Common myeloid progenitor, CD34-positive (primary cell): ENCODE measurements at regions of chr3 and their contacts with region 1.

Region 1: DNA sequence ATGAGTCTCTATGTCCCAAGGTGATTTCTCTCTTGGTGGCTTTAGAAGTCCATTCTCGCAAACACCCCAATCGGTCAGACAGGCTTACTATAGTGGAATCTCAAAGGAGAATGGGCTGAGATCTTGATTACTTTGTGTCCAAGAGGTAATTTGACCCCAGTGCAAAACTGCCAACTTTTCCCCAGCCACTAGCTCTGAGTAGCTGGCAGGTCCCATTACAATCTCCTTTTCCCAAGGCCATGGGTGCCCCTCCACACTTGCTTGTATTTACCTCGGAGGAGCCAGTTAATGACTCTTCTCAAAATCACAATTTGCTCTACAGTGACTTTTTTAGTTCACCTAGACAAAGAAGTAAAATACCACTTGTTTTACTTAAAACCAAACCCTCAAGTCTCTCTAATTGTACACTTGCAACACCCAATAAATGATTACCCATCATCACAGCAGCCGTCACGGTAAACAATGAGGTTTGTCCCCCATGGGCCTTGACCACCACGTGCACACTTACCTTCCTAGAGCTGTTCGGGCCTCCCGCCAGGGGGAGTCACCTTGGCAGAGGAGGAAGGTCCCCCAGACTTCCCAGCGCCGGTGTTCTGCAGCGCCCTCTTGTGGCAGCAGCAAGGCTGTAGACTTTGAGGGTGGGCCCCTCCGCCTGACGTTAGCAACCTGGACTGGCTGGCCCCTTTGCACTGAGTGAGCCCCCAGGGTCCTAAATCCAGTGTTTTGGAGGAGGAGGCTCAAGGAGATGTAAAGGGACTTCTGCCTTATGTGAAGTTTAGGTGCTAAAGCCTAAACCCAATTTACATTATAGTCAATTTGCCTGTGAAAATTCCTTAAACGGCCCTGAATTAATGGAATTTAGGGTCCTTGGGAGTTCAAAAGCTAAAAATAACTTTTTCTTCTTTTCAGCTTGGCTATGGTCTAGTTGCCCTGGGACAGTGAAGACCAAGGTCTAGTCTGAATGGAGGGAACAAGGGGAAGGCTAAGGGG is 18.6 kb upstream of the HDAC11 start:
- DNase-seq: peak; percentile 69 to 86 (median 82)
- H3K4me3 ChIP-seq: no peak overlapping the region
- H3K27ac ChIP-seq: no peak overlapping the region
- H3K4me1 ChIP-seq: no peaks in the 10 kb centered on the region
- H3K27me3 ChIP-seq: peaks cover 0 to 4% (median 0%) of the 10 kb centered on the region in 5 experiments

Region 2: GRCh38 chr3:13198264-13198879 is 263.1 kb before region 1 on chr3:
- CTCF ChIA-PET with region 1: interaction called, 10 read pairs
- POLR2A ChIA-PET with region 1: interaction called, 3 read pairs
- DNase-seq: no peak
- H3K4me3 ChIP-seq: no peak overlapping the region
- H3K27ac ChIP-seq: no peak overlapping the region
- H3K4me1 ChIP-seq: peaks cover 8 to 36% (median 15%) of the 10 kb centered on the region in 4 experiments
- H3K27me3 ChIP-seq: peaks cover 0 to 23% (median 5%) of the 10 kb centered on the region in 5 experiments

Region 3: DNA sequence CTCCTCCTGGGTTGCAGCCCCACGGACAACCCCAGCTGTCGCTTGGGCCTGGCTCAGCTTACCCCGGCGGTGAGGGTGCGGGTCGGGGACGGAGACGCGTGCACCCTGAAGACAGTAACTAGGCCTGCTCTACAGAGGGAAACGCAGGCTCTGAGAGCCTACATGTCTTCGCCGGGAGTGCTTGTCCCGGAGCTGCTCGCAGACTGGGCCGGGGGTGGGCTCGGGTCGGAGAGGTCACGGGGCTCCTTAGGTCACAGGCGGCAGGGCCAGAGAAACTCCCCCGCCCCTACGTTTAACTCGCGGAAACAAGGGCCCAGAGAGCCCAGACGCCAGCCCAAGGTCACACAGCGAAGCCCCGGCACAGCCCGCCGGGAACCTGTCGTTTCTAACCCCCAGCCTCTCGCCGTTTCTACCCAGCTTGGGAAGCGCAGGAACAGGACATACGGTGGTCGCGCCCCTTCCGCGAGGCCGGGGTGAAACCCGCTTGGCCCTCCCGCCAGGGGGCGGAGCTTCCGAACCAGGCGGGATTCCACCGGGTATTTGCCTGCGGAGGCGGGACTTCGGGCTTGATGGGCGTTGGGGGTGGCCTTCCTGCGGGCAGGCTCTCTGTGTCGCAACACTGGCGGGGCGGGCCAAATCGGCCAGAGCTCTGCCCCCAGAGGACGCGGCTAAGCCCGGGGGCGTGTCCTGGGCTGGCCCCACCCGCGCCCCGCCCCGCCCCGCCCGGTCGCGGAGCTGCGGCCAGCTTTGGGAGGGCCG is 18.3 kb after region 1 on chr3 and contains the start of gene HDAC11:
- CTCF ChIA-PET with region 1: interaction called, 38 read pairs
- POLR2A ChIA-PET with region 1: no interaction called
- DNase-seq: peak; percentile 96 to 97 (median 97)
- H3K4me3 ChIP-seq: peak within 1 kb of the TSS; percentile 43 to 94 (median 80)
- H3K27ac ChIP-seq: peak within 1 kb of the TSS; percentile 61 to 80
- H3K4me1 ChIP-seq: peaks cover 0 to 32% (median 20%) of the 10 kb centered on the region in 4 experiments
- H3K27me3 ChIP-seq: peaks cover 0 to 3% (median 0%) of the 10 kb centered on the region in 5 experiments

Region 4: DNA sequence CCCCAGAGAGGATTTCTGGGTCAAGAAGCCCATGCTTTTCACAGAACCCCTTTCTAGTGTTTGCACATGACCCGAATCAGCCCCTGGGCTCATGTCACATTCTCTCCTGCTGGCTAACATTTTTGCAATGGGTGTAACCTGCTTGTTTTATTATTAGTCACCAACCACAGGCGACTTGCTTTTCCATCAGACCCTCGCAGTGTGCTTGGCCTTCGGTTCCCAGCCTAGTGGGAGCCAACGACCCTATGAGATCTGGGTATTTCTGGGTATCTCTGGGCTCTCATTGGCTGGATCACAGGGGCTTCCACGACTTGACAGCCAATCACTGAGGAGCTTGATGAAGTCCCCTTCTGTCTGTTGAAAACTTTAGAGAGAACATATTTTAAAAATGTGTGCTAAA is 76.5 kb after region 1 on chr3:
- CTCF ChIA-PET with region 1: no interaction called
- POLR2A ChIA-PET with region 1: no interaction called
- DNase-seq: no peak
- H3K4me3 ChIP-seq: no peak overlapping the region
- H3K27ac ChIP-seq: no peak overlapping the region
- H3K4me1 ChIP-seq: peaks cover 0 to 14% (median 12%) of the 10 kb centered on the region in 4 experiments
- H3K27me3 ChIP-seq: no peaks in the 10 kb centered on the region